Mammary epithelial cell (primary cell): ENCODE measurements at regions of chr17 and their contacts with region 1.

Region 1: GRCh38 chr17:57855391-57856035 is 5.7 kb upstream of the MRPS23 start:
- DNase-seq: no peak
- H3K4me3 ChIP-seq: no peak overlapping the region
- H3K27ac ChIP-seq: no peak overlapping the region
- H3K4me1 ChIP-seq: peaks cover 7% of the 10 kb centered on the region
- H3K27me3 ChIP-seq: no peaks in the 10 kb centered on the region
- CTCF ChIP-seq: no peak

Region 2: GRCh38 chr17:57875309-57876115 is 20.0 kb after region 1 on chr17:
- CTCF ChIA-PET with region 1: no interaction called
- dilution Hi-C with region 1: no loop called
- in situ Hi-C with region 1: no loop called
- intact Hi-C with region 1: loop called (anchors 1 kb)
- DNase-seq: peak; percentile 91
- H3K4me3 ChIP-seq: no peak overlapping the region
- H3K27ac ChIP-seq: peak overlapping the region; percentile 61
- H3K4me1 ChIP-seq: peaks cover 70% of the 10 kb centered on the region
- H3K27me3 ChIP-seq: no peaks in the 10 kb centered on the region
- CTCF ChIP-seq: peak; percentile 57 to 58

Region 3: DNA sequence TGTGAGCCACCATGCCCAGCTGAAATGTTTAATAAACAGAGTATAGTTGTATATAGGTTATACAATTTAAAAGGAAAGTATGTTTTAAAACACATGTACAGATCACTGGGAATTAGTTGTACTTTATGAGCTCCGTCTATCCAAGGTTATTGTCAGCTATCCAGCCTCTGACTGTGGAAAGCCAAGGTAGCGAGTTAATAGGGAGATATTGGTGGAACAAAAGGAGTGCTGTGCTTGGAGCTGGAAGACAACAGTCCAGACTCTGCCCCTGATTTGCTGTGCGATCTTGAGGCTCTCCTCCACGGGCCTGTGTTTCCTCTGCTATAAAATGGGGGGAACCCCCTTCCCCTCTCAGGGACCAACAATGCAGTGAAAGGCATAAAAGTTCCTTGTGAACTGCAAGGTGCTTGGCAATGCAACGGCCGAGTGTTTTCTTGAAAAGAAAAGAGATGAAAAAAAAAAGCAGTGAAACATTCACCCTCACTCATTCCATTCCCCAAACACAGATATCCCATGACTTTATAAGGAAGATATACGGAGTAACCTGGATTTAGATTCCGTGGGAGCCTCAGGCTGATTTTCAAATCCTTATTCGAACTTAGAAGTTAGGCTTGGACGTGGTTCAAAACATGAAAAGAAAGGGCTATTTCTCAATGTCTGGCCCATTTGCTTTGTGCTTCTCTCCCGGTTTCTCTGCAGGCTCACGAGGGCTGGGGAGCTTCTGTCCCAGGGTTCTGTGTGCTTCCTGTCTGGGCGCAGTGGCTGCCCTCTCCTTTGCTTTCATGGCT is 65.6 kb after region 1 on chr17:
- CTCF ChIA-PET with region 1: no interaction called
- dilution Hi-C with region 1: loop called (anchors 5 kb)
- in situ Hi-C with region 1: no loop called
- intact Hi-C with region 1: no loop called
- DNase-seq: no peak
- H3K4me3 ChIP-seq: no peak overlapping the region
- H3K27ac ChIP-seq: no peak overlapping the region
- H3K4me1 ChIP-seq: peaks cover 11% of the 10 kb centered on the region
- H3K27me3 ChIP-seq: no peaks in the 10 kb centered on the region
- CTCF ChIP-seq: no peak

Region 4: DNA sequence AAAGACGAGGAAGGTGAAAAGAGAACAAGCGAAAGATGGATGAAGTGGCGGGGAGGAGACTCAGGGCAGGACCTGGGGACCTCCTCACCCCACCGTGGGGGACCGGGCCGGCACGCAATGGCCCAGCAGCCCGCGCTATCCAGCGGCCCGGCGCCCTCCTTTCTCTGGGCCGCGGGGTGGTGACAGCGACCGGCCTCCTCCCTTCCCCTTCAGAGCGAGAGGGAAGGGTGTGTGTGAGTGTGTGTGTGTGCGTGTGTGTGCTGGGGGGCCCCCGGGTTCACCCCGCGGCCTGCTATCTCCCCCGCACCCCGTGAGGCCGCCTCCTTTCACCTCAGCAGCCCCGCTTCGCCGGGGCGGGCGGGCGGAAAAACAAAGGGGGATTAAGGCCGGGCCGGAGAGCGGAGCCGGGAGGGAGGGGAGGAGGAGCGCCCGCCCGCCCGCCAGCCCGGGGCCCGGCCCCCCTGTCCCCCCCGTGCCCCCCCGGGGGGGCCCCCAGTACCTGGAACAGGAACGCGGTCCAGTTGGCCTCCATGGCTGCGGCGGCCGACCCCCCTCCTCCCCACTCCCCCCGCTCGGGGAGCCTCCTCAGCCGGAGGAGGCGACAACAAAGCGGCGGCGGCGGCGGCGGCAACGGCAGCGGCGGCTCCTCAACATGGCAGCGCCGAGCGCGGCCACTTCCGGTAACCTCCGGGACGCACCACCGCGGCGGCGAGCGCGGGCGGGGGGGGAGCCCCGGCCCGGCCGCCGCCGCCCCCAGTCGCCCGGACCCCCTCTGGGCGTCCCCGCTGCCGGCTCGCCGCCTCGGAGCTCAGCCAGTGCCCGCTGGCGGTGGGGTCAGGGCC is 132.3 kb after region 1 on chr17 and contains the start of gene VEZF1:
- CTCF ChIA-PET with region 1: no interaction called
- dilution Hi-C with region 1: loop called (anchors 5 kb)
- in situ Hi-C with region 1: no loop called
- intact Hi-C with region 1: loop called (anchors 1 kb)
- DNase-seq: peak; percentile 68
- H3K4me3 ChIP-seq: peak within 1 kb of the TSS; percentile 75 to 88 (median 86)
- H3K27ac ChIP-seq: peak within 1 kb of the TSS; percentile 80
- H3K4me1 ChIP-seq: peaks cover 27% of the 10 kb centered on the region
- H3K27me3 ChIP-seq: no peaks in the 10 kb centered on the region
- CTCF ChIP-seq: no peak
- total RNA-seq, gene VEZF1: 20.5 to 34.7 TPM